Activated naive CD4-positive, alpha-beta T cell treated with anti-CD3 and anti-CD28 coated beads for 36 hours (primary cell): ENCODE measurements at regions of chr5 and their contacts with region 1.

Region 1: GRCh38 chr5:113330533-113331208 is 104.1 kb downstream of the TSSK1B start:
- DNase-seq: peak; percentile 14
- H3K4me3 Mint-ChIP-seq: no peak overlapping the region
- H3K27ac Mint-ChIP-seq: no peak overlapping the region
- H3K4me1 Mint-ChIP-seq: peaks cover 16% of the 10 kb centered on the region
- H3K27me3 Mint-ChIP-seq: no peaks in the 10 kb centered on the region

Region 2: GRCh38 chr5:112551419-112552032 is 779.1 kb before region 1 on chr5:
- CTCF ChIA-PET with region 1: no interaction called
- intact Hi-C with region 1: loop called (anchors 1 kb)
- DNase-seq: peak; percentile 45
- H3K4me3 Mint-ChIP-seq: no peak overlapping the region
- H3K27ac Mint-ChIP-seq: no peak overlapping the region
- H3K4me1 Mint-ChIP-seq: no peaks in the 10 kb centered on the region
- H3K27me3 Mint-ChIP-seq: no peaks in the 10 kb centered on the region

Region 3: GRCh38 chr5:113043491-113043931 is 287.2 kb before region 1 on chr5:
- CTCF ChIA-PET with region 1: interaction called, 14 read pairs
- intact Hi-C with region 1: loop called (anchors 1 kb)
- DNase-seq: peak; percentile 38
- H3K4me3 Mint-ChIP-seq: no peak overlapping the region
- H3K27ac Mint-ChIP-seq: no peak overlapping the region
- H3K4me1 Mint-ChIP-seq: no peaks in the 10 kb centered on the region
- H3K27me3 Mint-ChIP-seq: no peaks in the 10 kb centered on the region

Region 4: DNA sequence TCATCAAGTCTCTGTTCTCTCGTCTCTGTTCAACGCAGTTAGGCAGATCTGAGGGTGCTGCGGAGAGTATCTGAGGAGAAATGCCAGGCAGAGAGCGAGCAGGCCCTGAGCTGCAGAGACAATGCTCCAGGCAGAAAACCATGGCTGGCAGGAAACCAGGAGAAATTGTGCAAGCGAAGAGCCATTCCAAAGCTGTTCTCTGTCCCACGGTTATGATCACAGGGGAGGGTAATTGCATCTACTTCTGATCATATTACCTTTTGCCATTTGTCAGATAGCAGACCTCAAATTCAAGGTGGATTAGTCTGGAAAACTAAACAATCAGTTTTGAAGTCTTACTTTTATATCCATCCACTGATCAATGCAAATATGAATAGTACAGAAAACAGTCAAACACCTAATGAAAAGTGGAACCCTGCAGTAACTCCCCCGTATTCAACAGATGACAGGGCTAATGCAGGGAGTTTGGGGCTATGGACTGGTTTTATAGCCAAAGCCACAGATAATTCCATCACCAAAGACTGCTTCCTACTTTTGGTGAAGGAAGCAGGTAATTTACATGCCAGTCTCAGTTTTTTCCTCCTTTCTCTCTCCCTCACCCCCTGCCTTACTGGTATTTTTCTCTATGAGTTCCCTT is 126.0 kb before region 1 on chr5:
- CTCF ChIA-PET with region 1: no interaction called
- intact Hi-C with region 1: loop called (anchors 1 kb)
- DNase-seq: no peak
- H3K4me3 Mint-ChIP-seq: no peak overlapping the region
- H3K27ac Mint-ChIP-seq: no peak overlapping the region
- H3K4me1 Mint-ChIP-seq: no peaks in the 10 kb centered on the region
- H3K27me3 Mint-ChIP-seq: no peaks in the 10 kb centered on the region

Region 5: GRCh38 chr5:113344973-113345940 is 14.6 kb after region 1 on chr5:
- CTCF ChIA-PET with region 1: no interaction called
- intact Hi-C with region 1: no loop called
- DNase-seq: no peak
- H3K4me3 Mint-ChIP-seq: no peak overlapping the region
- H3K27ac Mint-ChIP-seq: no peak overlapping the region
- H3K4me1 Mint-ChIP-seq: no peaks in the 10 kb centered on the region
- H3K27me3 Mint-ChIP-seq: peaks cover 7% of the 10 kb centered on the region

Region 6: GRCh38 chr5:113546703-113547183 is 216.1 kb after region 1 on chr5:
- CTCF ChIA-PET with region 1: no interaction called
- intact Hi-C with region 1: no loop called
- DNase-seq: peak; percentile 5
- H3K4me3 Mint-ChIP-seq: no peak overlapping the region
- H3K27ac Mint-ChIP-seq: peak overlapping the region; percentile 57
- H3K4me1 Mint-ChIP-seq: peaks cover 13% of the 10 kb centered on the region
- H3K27me3 Mint-ChIP-seq: no peaks in the 10 kb centered on the region

Region 7: DNA sequence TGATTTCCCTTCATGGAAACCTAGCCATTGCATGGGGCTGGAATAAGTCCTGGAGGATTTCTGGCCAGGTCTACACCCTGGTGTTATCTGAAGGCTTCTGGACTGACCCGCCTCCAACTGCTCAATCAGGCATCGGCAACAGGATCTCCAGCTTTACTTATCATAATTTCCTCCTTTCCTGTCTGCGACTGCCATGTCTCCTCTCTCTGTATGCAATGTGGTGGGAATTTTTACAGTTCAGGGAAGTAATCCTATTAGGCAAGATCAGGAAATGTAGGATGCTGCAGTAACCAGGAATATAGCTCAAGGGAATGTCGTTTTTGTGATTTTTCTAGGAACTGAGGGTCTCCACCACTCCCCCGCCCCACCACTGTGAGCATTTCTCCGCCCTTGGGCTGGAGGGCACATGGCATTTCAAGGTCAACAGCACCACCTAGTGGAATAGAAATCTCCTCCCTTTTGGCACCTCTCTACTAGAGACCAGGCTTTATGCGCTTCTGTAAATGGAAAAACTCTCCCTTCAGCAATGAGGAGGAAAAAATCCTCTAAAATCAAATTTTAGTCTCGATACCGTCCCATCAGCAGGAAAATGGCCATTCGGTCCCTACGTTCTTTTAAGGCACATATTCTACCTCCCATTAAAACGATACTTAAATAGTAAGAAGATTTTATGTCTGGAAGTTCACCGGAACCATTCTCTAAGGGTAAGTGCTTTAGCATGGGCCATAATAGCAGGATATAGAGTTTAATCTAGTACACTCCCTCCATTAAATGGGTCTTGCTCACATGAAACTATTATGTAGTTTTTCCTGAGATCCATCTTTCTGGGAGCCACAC is 275.8 kb after region 1 on chr5:
- CTCF ChIA-PET with region 1: interaction called, 10 read pairs
- intact Hi-C with region 1: loop called (anchors 1 kb)
- DNase-seq: peak; percentile 49
- H3K4me3 Mint-ChIP-seq: no peak overlapping the region
- H3K27ac Mint-ChIP-seq: no peak overlapping the region
- H3K4me1 Mint-ChIP-seq: peaks cover 3% of the 10 kb centered on the region
- H3K27me3 Mint-ChIP-seq: peaks cover 3% of the 10 kb centered on the region